ENCODE measurements at regions of chr12 and their contacts with region 1.

Region 1: DNA sequence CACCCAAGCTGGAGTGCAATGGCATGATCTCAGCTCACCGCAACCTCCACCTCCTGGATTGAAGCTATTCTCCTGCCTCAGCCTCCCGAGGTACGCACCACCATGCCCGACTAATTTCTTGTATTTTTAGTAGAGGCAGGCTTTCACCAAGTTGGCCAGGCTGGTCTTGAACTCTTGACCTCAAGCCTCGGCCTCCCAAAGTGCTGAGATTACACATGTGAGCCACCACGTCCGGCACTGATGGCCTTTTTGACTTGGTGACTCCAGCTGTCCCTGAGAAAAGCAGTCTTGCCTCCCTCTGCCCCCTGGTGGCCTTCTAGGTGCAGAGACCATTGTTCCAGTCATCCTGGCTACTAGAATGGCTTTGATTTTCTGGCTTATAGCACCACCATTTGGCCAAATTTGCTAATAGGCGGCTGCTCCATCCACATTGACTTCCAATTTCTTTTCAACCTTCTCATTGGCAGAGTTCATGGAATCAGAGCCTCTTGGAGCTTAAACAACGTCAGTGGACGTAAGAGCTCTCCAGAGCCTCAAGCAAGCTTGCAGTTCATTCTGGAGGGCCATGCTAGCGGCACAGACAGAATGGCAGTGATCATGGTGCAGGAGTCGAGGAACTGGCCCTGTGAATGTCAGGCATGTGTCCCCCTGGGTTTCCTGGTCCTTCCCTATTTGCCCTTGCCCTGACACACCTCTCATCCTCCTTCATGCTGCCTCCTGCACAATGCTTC is 25.4 kb upstream of the EIF4B start:
- DNase-seq: peak; percentile 73
- H3K4me3 Mint-ChIP-seq: no peak overlapping the region
- H3K27ac Mint-ChIP-seq: no peak overlapping the region
- H3K4me1 Mint-ChIP-seq: no peaks in the 10 kb centered on the region
- H3K27me3 Mint-ChIP-seq: peaks cover 29% of the 10 kb centered on the region

Region 2: DNA sequence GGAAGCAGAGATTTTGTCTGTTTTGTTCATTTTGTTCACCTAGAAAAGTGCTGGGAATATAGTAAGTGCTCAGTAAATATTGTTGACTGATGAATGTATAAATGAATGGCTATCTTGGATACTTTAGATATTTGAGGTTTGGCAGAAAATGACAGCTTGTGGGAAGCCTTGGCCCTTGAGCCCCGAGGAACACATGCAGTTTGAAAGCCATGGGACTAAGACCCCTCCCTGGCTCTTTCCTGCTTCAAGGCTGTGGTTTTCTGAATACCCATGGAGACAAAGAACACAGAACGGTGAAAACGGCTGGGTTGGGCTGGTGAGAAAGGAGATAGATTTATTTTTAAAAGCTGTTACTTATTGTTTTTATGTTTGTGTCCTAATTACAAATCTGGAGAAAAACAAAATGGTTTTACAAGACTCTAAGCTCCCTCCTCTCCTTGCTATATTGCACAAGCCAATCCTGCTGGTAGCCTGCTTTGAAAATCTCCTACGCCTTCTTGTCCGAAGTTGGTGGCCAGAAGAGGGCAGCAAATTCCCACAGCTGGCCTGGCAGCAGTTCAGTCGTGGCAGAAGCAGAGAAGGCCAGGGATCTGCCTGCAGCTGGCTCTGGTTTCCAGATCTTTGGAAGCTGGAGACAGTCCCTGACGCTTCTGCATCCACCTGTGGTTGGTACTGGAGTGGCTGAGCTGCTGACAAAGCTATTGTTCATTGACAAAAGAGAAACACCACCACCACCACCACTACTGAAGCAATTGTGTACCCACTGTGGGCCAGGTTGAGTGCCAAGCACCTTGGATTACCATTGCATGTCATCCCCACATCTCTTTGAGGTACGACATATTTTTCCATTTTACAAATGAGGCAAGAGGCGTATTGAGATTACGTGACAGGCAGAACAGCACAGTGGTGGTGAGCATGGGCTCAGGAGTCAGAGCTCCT is 608.4 kb before region 1 on chr12:
- intact Hi-C with region 1: loop called (anchors 2 kb)
- DNase-seq: peak; percentile 14
- H3K4me3 Mint-ChIP-seq: no peak overlapping the region
- H3K27ac Mint-ChIP-seq: no peak overlapping the region
- H3K4me1 Mint-ChIP-seq: no peaks in the 10 kb centered on the region
- H3K27me3 Mint-ChIP-seq: peaks cover 19% of the 10 kb centered on the region

Region 3: DNA sequence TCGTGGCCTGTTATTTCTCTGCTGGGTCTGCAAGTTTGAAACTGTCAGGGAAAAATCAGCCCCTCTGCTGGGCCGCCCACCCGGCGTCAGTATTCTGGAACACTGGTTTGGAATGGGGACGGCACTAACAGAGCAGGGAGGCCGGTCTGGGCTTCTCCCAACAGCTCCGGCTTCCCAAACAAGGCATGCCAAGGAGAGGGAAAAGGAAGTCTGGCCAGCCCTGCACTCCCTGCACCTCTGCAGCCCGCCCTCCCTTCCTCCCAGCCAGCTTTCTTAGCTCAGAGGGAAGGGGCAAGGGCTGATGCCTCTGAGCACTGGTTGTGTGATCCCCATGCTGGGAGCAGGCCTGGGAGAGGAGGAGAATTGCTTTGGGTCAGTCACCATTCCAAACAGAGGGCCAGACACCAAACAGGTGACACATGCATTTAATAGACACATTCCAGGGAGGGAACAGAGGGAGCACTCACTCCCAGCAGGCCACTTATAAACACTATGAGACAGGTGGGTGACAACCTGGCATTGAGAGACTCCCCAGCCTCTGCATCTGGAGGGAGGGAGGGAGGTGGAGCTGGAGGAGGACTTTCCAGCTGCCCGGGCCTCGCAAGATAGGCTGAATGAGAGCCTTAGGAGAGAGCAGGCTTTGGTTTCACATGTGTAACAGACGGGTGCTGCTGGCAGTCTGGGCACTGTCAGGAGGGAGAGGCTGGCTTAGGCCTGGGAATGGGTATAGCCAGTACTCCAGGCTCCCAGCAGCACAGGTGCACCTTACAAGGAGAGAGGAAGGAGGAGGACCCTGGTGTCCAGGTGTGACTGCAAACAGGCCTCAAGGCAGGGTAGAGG is 557.0 kb before region 1 on chr12:
- intact Hi-C with region 1: no loop called
- DNase-seq: no peak
- H3K4me3 Mint-ChIP-seq: no peak overlapping the region
- H3K27ac Mint-ChIP-seq: no peak overlapping the region
- H3K4me1 Mint-ChIP-seq: no peaks in the 10 kb centered on the region
- H3K27me3 Mint-ChIP-seq: peaks cover 7% of the 10 kb centered on the region

Region 4: GRCh38 chr12:52879394-52880351 is 101.2 kb before region 1 on chr12:
- intact Hi-C with region 1: loop called (anchors 1 kb)
- DNase-seq: peak; percentile 69
- H3K4me3 Mint-ChIP-seq: peak overlapping the region; percentile 72
- H3K27ac Mint-ChIP-seq: no peak overlapping the region
- H3K4me1 Mint-ChIP-seq: peaks cover 9% of the 10 kb centered on the region
- H3K27me3 Mint-ChIP-seq: peaks cover 13% of the 10 kb centered on the region

Region 5: DNA sequence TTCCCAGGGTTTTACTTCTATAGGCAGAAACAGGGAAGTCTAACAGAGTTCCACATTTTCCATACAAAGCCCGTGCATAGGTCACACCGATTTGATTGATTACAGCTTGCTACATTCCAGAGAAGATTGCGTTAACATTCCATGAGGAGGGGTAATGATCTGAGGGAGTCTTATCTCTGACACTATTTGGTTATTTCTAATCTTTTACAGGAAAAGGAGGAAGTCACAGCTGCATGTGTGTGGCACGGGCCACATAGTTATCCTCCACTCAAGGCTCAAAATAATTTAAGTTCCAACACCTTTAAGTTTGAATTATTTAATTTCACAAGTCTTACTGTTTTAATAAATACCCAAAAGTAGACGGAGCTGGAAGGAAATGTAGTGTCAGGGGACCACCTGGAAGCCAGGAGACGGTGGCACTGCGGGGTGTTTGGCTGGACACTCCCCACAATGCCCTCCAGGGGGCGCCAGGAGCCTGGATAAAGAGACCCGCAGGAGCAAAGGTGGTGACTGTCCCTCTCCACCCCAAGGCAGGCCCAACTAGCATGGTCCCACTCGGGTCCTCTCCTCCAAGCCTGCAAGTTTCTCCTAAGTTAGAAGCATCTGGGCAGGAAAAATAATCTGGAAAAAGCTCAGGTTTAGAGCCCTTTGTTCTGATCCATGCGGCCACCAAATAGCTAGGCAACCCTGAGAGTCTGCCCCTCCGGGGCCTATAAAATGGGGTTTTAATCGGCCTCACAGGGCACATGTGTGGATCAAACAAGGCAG is 96.1 kb before region 1 on chr12:
- intact Hi-C with region 1: loop called (anchors 1 kb)
- DNase-seq: peak; percentile 61
- H3K4me3 Mint-ChIP-seq: no peak overlapping the region
- H3K27ac Mint-ChIP-seq: no peak overlapping the region
- H3K4me1 Mint-ChIP-seq: peaks cover 6% of the 10 kb centered on the region
- H3K27me3 Mint-ChIP-seq: peaks cover 20% of the 10 kb centered on the region

Measured in activated T-helper 1 cell treated with anti-CD3 and anti-CD28 coated beads, Interleukin-12 subunit alpha, Interleukin-12 subunit beta, Interleukin-2, Interleukin-4 antibody, amounts not matched to agents 30 ng/mL and 10 ng/mL and 1 ng/mL, durations not matched to agents 14 hours and 24 hours and 36 hours (primary cell).